Activated naive CD4-positive, alpha-beta T cell treated with anti-CD3 and anti-CD28 coated beads, Interleukin-2, amount 10 ng/mL, durations not matched to agents 7 days and 5 days (primary cell): ENCODE measurements at regions of chr5 and their contacts with region 1.

Region 1: DNA sequence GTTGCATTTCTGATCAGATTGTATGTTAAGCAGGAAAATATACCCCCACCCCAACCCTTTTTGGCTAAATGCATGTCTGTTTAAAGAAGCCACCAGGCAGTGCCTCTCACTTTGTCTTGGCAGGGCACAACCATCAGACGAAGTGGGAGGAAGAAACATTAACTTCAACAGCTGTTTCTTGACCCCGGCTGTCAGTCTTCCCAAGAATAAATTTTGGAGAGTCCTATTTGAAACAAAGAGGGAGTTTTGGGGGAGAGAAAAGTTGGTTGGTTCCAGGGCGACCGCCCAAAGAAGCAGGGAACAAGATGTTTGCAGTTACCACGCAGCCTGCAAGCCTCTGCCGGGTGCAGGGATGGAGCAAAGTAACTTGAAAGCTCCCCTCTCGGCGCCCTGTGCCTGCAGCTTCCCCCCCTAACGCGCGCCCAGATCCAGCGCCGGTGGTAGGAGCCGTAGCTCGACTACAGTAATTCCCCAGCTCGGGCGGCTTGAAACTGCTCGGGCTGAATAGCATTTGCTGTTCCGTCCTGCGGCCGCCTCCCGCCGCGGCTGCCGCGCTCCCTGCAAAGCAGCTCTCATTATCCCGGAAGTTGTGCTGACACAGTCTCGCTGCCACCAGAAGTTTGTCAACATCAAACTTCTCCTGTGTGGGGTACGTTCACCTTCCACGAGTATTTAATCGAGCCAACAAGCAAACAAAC is 100.7 kb upstream of the SSBP2 start:
- DNase-seq: peak; percentile 94
- H3K4me3 Mint-ChIP-seq: peak overlapping the region; percentile 94
- H3K27ac Mint-ChIP-seq: peak overlapping the region; percentile 98
- H3K4me1 Mint-ChIP-seq: peaks cover 47% of the 10 kb centered on the region
- H3K27me3 Mint-ChIP-seq: peaks cover 4% of the 10 kb centered on the region

Region 2: DNA sequence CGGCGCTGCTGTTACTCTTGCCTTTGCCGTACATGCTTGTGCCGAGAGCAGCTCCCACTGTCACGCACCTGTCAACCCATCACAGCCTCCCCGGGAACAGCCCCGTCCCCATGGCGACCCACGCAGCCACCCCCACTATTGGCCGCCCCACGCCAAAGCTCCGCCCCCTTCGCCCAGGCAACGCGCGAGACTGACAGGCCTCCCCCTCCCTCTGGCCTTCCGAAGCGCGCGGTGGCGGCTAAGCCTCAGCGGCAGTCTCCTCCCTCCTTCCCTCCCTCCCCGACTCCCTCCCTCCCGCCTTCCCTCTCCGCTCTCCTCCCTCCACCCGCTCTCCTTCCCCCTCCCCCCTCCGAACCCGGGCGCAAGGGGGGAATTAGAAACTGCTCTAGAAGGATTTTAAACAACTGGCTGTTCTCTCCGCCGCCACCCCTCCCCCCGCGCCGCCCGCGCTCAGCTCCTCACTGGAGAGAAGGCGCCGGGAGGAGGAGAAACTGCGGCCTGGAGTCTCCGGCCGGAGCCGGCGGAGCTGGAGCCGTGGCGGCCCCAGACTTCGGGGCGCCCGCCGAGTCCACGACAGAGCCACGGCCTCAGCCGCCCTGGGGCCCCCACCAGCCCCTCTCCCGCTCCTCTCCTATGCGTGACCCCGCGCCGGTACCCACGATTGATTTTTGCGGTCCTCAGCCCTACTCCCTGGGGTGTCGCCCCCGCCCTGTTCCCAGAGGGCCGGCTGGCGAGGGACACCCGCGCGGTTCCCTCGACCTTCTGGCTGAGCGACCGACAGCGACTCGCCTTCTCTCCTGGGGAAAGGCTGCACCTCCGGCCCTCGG is 100.4 kb before region 1 on chr5 and contains the start of gene SSBP2:
- CTCF ChIA-PET with region 1: interaction called, 23 read pairs
- DNase-seq: peak; percentile 100
- H3K4me3 Mint-ChIP-seq: peak within 1 kb of the TSS; percentile 95
- H3K27ac Mint-ChIP-seq: peak within 1 kb of the TSS; percentile 97
- H3K4me1 Mint-ChIP-seq: peaks cover 28% of the 10 kb centered on the region
- H3K27me3 Mint-ChIP-seq: peaks cover 28% of the 10 kb centered on the region

Region 3: DNA sequence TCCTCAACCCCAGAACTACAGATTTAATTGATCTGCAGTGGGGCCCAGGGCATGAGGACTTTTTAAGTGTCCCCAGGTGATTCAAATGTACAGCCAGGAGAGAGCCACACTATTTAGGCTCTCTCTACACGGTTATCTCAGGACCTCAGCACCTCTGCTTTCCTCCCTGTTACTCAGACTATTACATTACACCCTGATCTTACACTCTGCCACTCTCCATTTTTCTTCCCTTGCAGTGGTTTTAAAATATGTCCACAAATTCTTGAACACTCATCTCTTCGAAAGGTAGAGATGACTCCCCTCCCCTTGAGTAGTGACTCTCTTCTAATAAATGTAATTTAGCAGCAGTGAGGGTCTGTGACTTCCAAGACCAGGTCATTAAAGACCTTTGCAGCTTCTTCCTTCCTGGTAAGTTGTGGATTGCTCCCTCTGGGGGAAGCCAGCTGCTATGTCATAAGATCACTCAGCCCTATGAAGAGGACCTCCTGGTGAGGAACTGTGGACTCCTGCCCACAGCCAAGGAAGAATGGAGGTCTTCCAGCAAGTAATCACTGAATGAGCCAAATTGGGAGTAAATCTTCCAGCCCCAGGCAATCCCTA is 13.2 kb before region 1 on chr5:
- CTCF ChIA-PET with region 1: interaction called, 21 read pairs
- DNase-seq: peak; percentile 49
- H3K4me3 Mint-ChIP-seq: no peak overlapping the region
- H3K27ac Mint-ChIP-seq: no peak overlapping the region
- H3K4me1 Mint-ChIP-seq: no peaks in the 10 kb centered on the region
- H3K27me3 Mint-ChIP-seq: peaks cover 4% of the 10 kb centered on the region